ENCODE measurements at regions of chr11 and their contacts with region 1.

Region 1: GRCh38 chr11:11028017-11028692 is 170.3 kb upstream of the ZBED5 start:
- DNase-seq: peak; percentile 69
- ATAC-seq: peak; percentile 88
- H3K4me3 ChIP-seq: no peak overlapping the region
- H3K4me3 Mint-ChIP-seq: no peak overlapping the region
- H3K27ac ChIP-seq: no peak overlapping the region
- H3K27ac Mint-ChIP-seq: no peak overlapping the region
- H3K4me1 ChIP-seq: no peaks in the 10 kb centered on the region
- H3K4me1 Mint-ChIP-seq: peaks cover 2% of the 10 kb centered on the region
- H3K27me3 ChIP-seq: peaks cover 0 to 10% (median 6%) of the 10 kb centered on the region in 4 experiments
- H3K27me3 Mint-ChIP-seq: peaks cover 25% of the 10 kb centered on the region
- CTCF ChIP-seq: peak; percentile 93

Region 2: DNA sequence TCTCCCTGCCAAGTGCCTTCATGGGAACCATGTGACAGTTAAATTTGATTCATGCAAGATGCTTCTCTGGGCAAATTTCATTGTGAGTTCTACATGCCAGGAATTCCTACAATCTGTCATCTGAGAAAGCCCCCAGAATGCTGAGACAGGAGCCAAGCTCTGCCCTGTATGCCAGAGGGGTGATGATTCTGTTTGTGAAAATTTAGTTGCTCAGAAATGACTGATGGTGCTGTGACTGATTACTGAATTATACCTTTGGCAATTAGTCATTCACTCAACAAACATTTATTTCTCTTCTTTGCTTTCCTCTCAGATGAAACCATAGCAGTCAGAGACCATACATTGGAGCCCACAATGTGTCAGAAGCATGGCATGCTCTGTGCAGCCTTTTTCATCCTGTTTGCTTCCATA is 101.3 kb before region 1 on chr11:
- CTCF ChIA-PET with region 1: interaction called, 37 read pairs
- POLR2A ChIA-PET with region 1: no interaction called
- intact Hi-C with region 1: no loop called
- DNase-seq: no peak
- ATAC-seq: no peak
- H3K4me3 ChIP-seq: no peak overlapping the region
- H3K4me3 Mint-ChIP-seq: no peak overlapping the region
- H3K27ac ChIP-seq: no peak overlapping the region
- H3K27ac Mint-ChIP-seq: no peak overlapping the region
- H3K4me1 ChIP-seq: peaks cover 11 to 13% of the 10 kb centered on the region in 2 donors
- H3K4me1 Mint-ChIP-seq: peaks cover 10% of the 10 kb centered on the region
- H3K27me3 ChIP-seq: peaks cover 0 to 30% (median 18%) of the 10 kb centered on the region in 4 experiments
- H3K27me3 Mint-ChIP-seq: peaks cover 46% of the 10 kb centered on the region
- CTCF ChIP-seq: no peak

Region 3: GRCh38 chr11:11010624-11011127 is 17.5 kb before region 1 on chr11:
- CTCF ChIA-PET with region 1: interaction called, 19 read pairs
- POLR2A ChIA-PET with region 1: no interaction called
- intact Hi-C with region 1: no loop called
- DNase-seq: peak; percentile 31
- ATAC-seq: no peak
- H3K4me3 ChIP-seq: no peak overlapping the region
- H3K4me3 Mint-ChIP-seq: no peak overlapping the region
- H3K27ac ChIP-seq: no peak overlapping the region
- H3K27ac Mint-ChIP-seq: no peak overlapping the region
- H3K4me1 ChIP-seq: peaks cover 24% of the 10 kb centered on the region in 2 donors
- H3K4me1 Mint-ChIP-seq: peaks cover 23% of the 10 kb centered on the region
- H3K27me3 ChIP-seq: peaks cover 0 to 14% (median 6%) of the 10 kb centered on the region in 4 experiments
- H3K27me3 Mint-ChIP-seq: peaks cover 18% of the 10 kb centered on the region
- CTCF ChIP-seq: no peak

Region 4: DNA sequence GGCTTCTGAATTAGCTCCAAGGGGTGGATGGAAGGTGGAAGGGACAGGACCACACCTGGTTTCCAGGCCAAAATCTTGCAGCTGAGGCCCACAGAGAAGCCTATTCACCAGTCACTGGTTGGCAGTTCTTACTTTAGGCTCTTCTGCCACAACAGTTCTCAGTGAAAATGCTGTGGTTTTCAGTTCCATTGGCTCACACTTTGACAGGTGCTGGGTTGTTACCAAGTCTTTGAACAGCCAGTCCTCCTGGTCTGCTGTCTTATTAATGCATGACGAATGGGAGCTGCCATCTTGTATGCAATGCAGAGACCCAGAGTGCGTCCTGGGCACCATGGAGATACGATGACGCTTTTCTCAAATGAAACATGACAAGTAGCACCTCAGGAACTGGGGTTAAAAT is 61.6 kb after region 1 on chr11:
- CTCF ChIA-PET with region 1: no interaction called
- POLR2A ChIA-PET with region 1: no interaction called
- intact Hi-C with region 1: no loop called
- DNase-seq: no peak
- ATAC-seq: no peak
- H3K4me3 ChIP-seq: no peak overlapping the region
- H3K4me3 Mint-ChIP-seq: no peak overlapping the region
- H3K27ac ChIP-seq: no peak overlapping the region
- H3K27ac Mint-ChIP-seq: no peak overlapping the region
- H3K4me1 ChIP-seq: no peaks in the 10 kb centered on the region
- H3K4me1 Mint-ChIP-seq: peaks cover 2% of the 10 kb centered on the region
- H3K27me3 ChIP-seq: no peaks in the 10 kb centered on the region
- H3K27me3 Mint-ChIP-seq: peaks cover 13% of the 10 kb centered on the region
- CTCF ChIP-seq: no peak

Region 5: GRCh38 chr11:11230802-11231562 is 202.8 kb after region 1 on chr11:
- CTCF ChIA-PET with region 1: no interaction called
- POLR2A ChIA-PET with region 1: no interaction called
- intact Hi-C with region 1: no loop called
- DNase-seq: no peak
- ATAC-seq: no peak
- H3K4me3 ChIP-seq: no peak overlapping the region
- H3K4me3 Mint-ChIP-seq: no peak overlapping the region
- H3K27ac ChIP-seq: no peak overlapping the region
- H3K27ac Mint-ChIP-seq: no peak overlapping the region
- H3K4me1 ChIP-seq: no peaks in the 10 kb centered on the region
- H3K4me1 Mint-ChIP-seq: no peaks in the 10 kb centered on the region
- H3K27me3 ChIP-seq: peaks cover 0 to 12% (median 2%) of the 10 kb centered on the region in 4 experiments
- H3K27me3 Mint-ChIP-seq: peaks cover 33% of the 10 kb centered on the region
- CTCF ChIP-seq: no peak

Region 6: GRCh38 chr11:11787305-11788062 is 759.3 kb after region 1 on chr11:
- CTCF ChIA-PET with region 1: interaction called, 106 read pairs
- POLR2A ChIA-PET with region 1: no interaction called
- intact Hi-C with region 1: loop called (anchors 1 kb)
- DNase-seq: peak; percentile 77
- ATAC-seq: peak; percentile 68
- H3K4me3 ChIP-seq: no peak overlapping the region
- H3K4me3 Mint-ChIP-seq: no peak overlapping the region
- H3K27ac ChIP-seq: no peak overlapping the region
- H3K27ac Mint-ChIP-seq: no peak overlapping the region
- H3K4me1 ChIP-seq: no peaks in the 10 kb centered on the region
- H3K4me1 Mint-ChIP-seq: no peaks in the 10 kb centered on the region
- H3K27me3 ChIP-seq: peaks cover 0 to 10% (median 3%) of the 10 kb centered on the region in 4 experiments
- H3K27me3 Mint-ChIP-seq: peaks cover 28% of the 10 kb centered on the region
- CTCF ChIP-seq: peak; percentile 95

Region 7: GRCh38 chr11:12050470-12051286 is 1022.5 kb after region 1 on chr11:
- CTCF ChIA-PET with region 1: no interaction called
- POLR2A ChIA-PET with region 1: no interaction called
- intact Hi-C with region 1: loop called (anchors 5 kb)
- DNase-seq: no peak
- ATAC-seq: no peak
- H3K4me3 ChIP-seq: no peak overlapping the region
- H3K4me3 Mint-ChIP-seq: no peak overlapping the region
- H3K27ac ChIP-seq: no peak overlapping the region
- H3K27ac Mint-ChIP-seq: no peak overlapping the region
- H3K4me1 ChIP-seq: no peaks in the 10 kb centered on the region
- H3K4me1 Mint-ChIP-seq: no peaks in the 10 kb centered on the region
- H3K27me3 ChIP-seq: no peaks in the 10 kb centered on the region
- H3K27me3 Mint-ChIP-seq: peaks cover 9% of the 10 kb centered on the region
- CTCF ChIP-seq: no peak

Measured in B cell (primary cell).